Common myeloid progenitor, CD34-positive (primary cell): ENCODE measurements at regions of chr13 and their contacts with region 1.

Region 1: GRCh38 chr13:99501184-99501847 is at the start of gene TM9SF2:
- DNase-seq: peak; percentile 97 to 99 (median 98)
- H3K4me3 ChIP-seq: peak within 1 kb of the TSS; percentile 81 to 98 (median 94)
- H3K27ac ChIP-seq: peak within 1 kb of the TSS; percentile 89 to 94
- H3K4me1 ChIP-seq: peaks cover 31 to 78% (median 57%) of the 10 kb centered on the region in 4 experiments
- H3K27me3 ChIP-seq: no peaks in the 10 kb centered on the region

Region 2: DNA sequence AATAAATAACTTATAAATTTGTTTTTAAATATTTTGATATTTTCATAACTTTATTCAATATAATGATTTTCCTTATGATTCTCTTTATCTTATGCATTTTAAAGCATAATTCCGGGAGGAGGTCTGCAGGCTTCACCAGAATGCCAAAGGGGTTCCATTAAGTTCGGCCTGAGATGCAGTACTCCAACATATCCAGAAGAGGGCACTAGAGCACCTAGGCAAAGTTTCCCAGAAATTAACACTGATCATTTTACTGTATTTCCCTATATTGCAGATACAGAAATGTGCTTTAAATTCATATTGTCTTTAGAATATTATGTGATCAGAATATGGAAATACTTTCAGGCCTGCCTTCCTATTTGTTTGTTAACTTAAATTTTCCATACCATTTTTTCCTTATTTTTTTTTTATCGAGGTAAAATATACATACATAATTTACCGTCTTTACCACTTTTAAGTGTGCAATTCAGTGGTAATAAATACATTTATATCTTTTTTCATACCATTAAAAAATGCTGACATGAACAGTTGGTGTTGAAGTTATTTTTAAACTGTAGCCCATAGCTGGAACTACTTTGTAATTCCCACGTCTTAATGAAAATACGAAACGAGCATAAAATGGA is 58.9 kb before region 1 on chr13:
- CTCF ChIA-PET with region 1: interaction called, 41 read pairs
- POLR2A ChIA-PET with region 1: no interaction called
- DNase-seq: peak; percentile 53 to 78 (median 71)
- H3K4me3 ChIP-seq: no peak overlapping the region
- H3K27ac ChIP-seq: no peak overlapping the region
- H3K4me1 ChIP-seq: peaks cover 0 to 2% (median 0%) of the 10 kb centered on the region in 4 experiments
- H3K27me3 ChIP-seq: peaks cover 0 to 3% (median 0%) of the 10 kb centered on the region in 5 experiments

Region 3: GRCh38 chr13:99467764-99468163 is 33.6 kb before region 1 on chr13:
- CTCF ChIA-PET with region 1: interaction called, 21 read pairs
- POLR2A ChIA-PET with region 1: no interaction called
- DNase-seq: no peak
- H3K4me3 ChIP-seq: no peak overlapping the region
- H3K27ac ChIP-seq: no peak overlapping the region
- H3K4me1 ChIP-seq: peaks cover 11 to 27% (median 16%) of the 10 kb centered on the region in 4 experiments
- H3K27me3 ChIP-seq: no peaks in the 10 kb centered on the region

Region 4: DNA sequence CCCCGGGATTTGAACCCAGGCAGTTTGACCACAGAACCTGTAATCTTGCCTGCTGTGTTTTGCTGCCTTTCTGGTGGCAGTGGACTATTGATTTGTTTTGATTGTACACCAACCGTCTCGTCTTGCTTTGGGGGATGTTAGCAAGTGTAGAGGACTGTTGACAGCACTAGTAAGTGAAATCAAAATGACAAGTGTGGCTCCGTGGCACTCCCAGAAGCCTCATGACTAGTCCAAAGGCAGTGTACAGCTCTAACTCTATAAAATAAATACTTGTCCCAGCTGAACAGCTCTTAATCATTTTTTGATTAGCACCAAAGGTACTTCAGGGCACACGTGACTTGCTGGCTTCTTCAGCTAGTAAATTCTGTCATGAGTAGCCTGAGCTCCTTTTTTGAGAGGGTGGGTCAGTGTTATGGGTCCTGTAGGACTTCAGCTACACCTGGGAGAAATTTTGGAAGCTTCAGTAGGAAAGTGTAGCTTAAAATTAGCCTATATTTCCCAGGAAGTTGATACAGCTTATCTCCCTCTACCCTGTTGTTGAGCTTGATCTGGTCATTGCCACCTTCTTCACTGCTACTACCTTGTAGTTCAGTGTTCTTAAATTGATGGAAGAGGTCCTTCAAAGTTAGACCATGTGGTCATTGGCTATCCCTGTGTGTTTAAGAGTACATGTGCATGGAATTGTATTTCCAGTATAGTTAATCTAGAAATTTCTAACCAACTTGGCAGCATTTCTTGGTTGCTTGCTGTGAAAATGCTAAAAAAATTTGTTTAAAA is 15.0 kb after region 1 on chr13:
- CTCF ChIA-PET with region 1: interaction called, 42 read pairs
- POLR2A ChIA-PET with region 1: no interaction called
- DNase-seq: no peak
- H3K4me3 ChIP-seq: no peak overlapping the region
- H3K27ac ChIP-seq: no peak overlapping the region
- H3K4me1 ChIP-seq: peaks cover 0 to 3% (median 1%) of the 10 kb centered on the region in 4 experiments
- H3K27me3 ChIP-seq: no peaks in the 10 kb centered on the region

Region 5: DNA sequence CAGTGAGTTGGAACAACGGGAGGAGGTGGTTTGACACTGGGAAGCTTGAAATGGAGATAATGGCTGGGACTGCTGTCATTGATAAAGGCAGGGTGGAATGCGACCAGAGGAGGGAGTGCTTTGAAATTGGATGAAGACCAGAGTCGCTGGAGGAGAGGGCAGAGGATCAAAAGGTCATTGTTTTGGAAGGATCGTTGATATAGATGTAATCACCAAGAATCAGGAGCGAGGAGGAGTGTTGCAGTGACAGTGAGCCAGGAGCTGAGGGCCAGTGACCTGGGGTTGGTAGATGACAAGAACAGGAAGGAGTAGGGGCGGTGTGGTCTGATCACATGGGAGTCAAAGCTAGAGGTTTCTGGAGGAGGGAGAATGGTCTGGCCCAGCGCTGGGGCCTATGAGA is 25.2 kb after region 1 on chr13:
- CTCF ChIA-PET with region 1: interaction called, 10 read pairs
- POLR2A ChIA-PET with region 1: interaction called, 3 read pairs
- DNase-seq: peak in 2 of 3 donors; percentile 23 to 29
- H3K4me3 ChIP-seq: no peak overlapping the region
- H3K27ac ChIP-seq: no peak overlapping the region
- H3K4me1 ChIP-seq: peaks cover 0 to 10% (median 3%) of the 10 kb centered on the region in 4 experiments
- H3K27me3 ChIP-seq: no peaks in the 10 kb centered on the region

Region 6: GRCh38 chr13:99709134-99709533 is 207.8 kb after region 1 on chr13:
- CTCF ChIA-PET with region 1: no interaction called
- POLR2A ChIA-PET with region 1: no interaction called
- DNase-seq: no peak
- H3K4me3 ChIP-seq: no peak overlapping the region
- H3K27ac ChIP-seq: no peak overlapping the region
- H3K4me1 ChIP-seq: no peaks in the 10 kb centered on the region
- H3K27me3 ChIP-seq: no peaks in the 10 kb centered on the region